Mammary epithelial cell (primary cell): ENCODE measurements at regions of chr2 and their contacts with region 1.

Region 1: DNA sequence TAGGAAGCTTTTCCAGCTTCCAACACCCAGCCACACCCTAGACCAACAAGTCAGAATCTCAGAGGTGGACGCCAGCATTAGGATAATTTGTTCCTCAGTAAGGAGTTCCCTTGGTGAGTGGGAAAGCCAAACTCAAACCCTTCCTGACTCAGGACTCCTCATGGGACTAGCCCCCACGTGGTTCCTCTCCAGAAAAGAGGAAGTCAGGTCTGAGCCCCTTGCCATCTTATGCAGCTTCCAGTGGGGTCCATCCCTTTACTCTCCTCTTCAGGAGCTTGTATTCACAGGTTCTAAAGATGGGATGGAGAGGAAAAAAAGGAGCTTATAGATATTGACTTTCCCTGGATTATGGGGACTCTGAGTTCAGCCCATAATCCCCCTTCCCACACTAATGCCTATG is 14.8 kb upstream of the NOTO start:
- DNase-seq: no peak
- H3K4me3 ChIP-seq: no peak overlapping the region
- H3K27ac ChIP-seq: no peak overlapping the region
- H3K4me1 ChIP-seq: no peaks in the 10 kb centered on the region
- H3K27me3 ChIP-seq: no peaks in the 10 kb centered on the region
- CTCF ChIP-seq: no peak

Region 2: GRCh38 chr2:73223821-73224220 is 36.3 kb after region 1 on chr2:
- CTCF ChIA-PET with region 1: no interaction called
- dilution Hi-C with region 1: loop called (anchors 5 kb)
- in situ Hi-C with region 1: no loop called
- intact Hi-C with region 1: no loop called
- DNase-seq: no peak
- H3K4me3 ChIP-seq: no peak overlapping the region
- H3K27ac ChIP-seq: no peak overlapping the region
- H3K4me1 ChIP-seq: no peaks in the 10 kb centered on the region
- H3K27me3 ChIP-seq: no peaks in the 10 kb centered on the region
- CTCF ChIP-seq: no peak